ENCODE measurements at regions of chr6 and their contacts with region 1.

Region 1: GRCh38 chr6:16277101-16277981 is 39.0 kb downstream of the GMPR start:
- DNase-seq: peak; percentile 59 to 76
- H3K4me3 ChIP-seq: no peak overlapping the region
- H3K27ac ChIP-seq: no peak overlapping the region
- H3K4me1 ChIP-seq: no peaks in the 10 kb centered on the region; a peak in 2 of 7 replicates
- H3K27me3 ChIP-seq: no peaks in the 10 kb centered on the region
- CTCF ChIP-seq: peak; percentile 68 to 78 (median 73)
- EP300 ChIP-seq: no peak
- POLR2A ChIP-seq: no peak
- RAD21 ChIP-seq: peak; percentile 77 to 81

Region 2: DNA sequence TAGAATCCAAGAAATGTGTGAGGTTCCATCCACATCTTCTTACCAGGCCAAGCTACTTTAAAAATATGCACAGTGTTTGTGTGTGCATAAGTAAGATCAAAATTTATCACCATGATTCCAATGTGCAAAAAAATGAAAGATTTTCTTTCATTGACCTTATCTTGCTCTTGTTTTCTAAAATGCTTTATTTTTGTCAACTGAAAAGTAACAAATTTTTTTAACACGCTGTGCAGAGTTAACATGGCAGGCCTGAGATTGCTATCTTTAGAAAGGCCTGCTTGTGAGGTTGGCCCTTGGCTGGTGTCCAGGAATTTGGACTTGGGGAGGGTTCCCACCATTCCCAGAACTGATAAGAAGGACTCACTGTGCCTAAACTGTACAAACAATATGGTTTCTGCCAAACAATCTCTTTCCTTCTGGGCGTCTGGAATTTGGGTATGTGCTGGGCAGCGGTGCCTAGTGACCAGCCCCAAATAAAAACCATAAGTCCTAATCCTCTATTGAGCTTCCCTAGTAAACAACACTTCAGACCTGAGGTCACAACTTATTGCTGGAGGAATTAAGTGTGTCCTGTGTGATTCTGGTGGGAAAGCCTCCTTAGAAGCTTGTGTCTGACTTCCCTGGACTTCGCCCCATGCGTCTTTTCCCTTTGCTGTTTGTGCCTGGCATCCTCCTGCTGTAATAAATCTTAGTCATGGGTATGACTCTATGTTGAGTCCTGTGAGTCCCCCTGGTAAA is 168.3 kb before region 1 on chr6:
- CTCF ChIA-PET with region 1: no interaction called
- POLR2A ChIA-PET with region 1: no interaction called
- DNase-seq: no peak
- H3K4me3 ChIP-seq: no peak overlapping the region
- H3K27ac ChIP-seq: no peak overlapping the region
- H3K4me1 ChIP-seq: peaks cover 0 to 3% (median 0%) of the 10 kb centered on the region in 4 experiments; a peak in 1 of 7 replicates
- H3K27me3 ChIP-seq: no peaks in the 10 kb centered on the region
- CTCF ChIP-seq: no peak
- EP300 ChIP-seq: no peak
- POLR2A ChIP-seq: no peak
- RAD21 ChIP-seq: no peak

Region 3: GRCh38 chr6:16238057-16238962 is 39.0 kb before region 1 on chr6 and contains the start of gene GMPR:
- CTCF ChIA-PET with region 1: interaction called, 57 read pairs
- POLR2A ChIA-PET with region 1: no interaction called
- DNase-seq: peak in 1 of 2 experiments; percentile 63
- H3K4me3 ChIP-seq: peak within 1 kb of the TSS; percentile 39 to 67 (median 64)
- H3K27ac ChIP-seq: no peak within 1 kb of the TSS
- H3K4me1 ChIP-seq: peaks cover 0 to 6% (median 3%) of the 10 kb centered on the region in 4 experiments; a peak in 4 of 7 replicates
- H3K27me3 ChIP-seq: peaks cover 12 to 36% (median 30%) of the 10 kb centered on the region in 4 experiments
- CTCF ChIP-seq: no peak
- EP300 ChIP-seq: no peak
- POLR2A ChIP-seq: no peak
- RAD21 ChIP-seq: no peak
- total RNA-seq, gene GMPR: 0.99 and 1.2 TPM in 2 replicates

Region 4: DNA sequence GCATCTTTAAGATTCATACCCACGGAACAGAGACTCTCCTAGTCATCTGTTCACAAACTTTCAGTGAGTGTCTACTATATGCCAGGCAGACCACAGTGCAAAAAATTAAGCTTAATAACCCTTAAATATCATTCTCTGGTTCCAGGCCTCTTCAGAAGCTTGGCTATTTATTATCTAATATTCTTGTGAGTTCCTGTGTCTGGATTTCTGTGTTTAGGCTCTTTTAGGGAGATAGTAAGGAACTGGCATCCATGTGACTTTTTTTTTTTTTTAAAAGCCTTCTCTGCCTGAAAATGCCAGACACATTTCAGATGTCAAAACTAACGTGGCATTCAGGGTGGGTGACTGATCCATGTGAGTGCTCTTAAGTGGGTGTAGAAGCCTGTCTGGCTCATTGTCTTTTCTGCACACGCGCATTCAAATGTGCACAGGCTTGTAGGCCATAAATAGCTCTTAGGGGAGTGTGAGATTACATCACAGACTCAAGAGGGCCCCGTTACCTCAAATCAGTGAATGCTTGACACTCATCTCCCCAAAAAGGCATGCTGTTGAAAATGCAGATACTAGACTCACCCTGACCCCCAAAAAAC is 103.0 kb after region 1 on chr6:
- CTCF ChIA-PET with region 1: no interaction called
- POLR2A ChIA-PET with region 1: no interaction called
- DNase-seq: no peak
- H3K4me3 ChIP-seq: no peak overlapping the region
- H3K27ac ChIP-seq: no peak overlapping the region
- H3K4me1 ChIP-seq: no peaks in the 10 kb centered on the region; a peak in 1 of 7 replicates
- H3K27me3 ChIP-seq: no peaks in the 10 kb centered on the region
- CTCF ChIP-seq: no peak
- EP300 ChIP-seq: no peak
- POLR2A ChIP-seq: no peak
- RAD21 ChIP-seq: peak in 1 of 2 experiments; percentile 22; a peak in 1 of 4 replicates

Region 5: GRCh38 chr6:16494793-16495192 is 217.5 kb after region 1 on chr6:
- CTCF ChIA-PET with region 1: no interaction called
- POLR2A ChIA-PET with region 1: no interaction called
- DNase-seq: no peak
- H3K4me3 ChIP-seq: no peak overlapping the region
- H3K27ac ChIP-seq: no peak overlapping the region
- H3K4me1 ChIP-seq: peaks cover 4 to 21% (median 9%) of the 10 kb centered on the region in 4 experiments
- H3K27me3 ChIP-seq: no peaks in the 10 kb centered on the region
- CTCF ChIP-seq: no peak
- EP300 ChIP-seq: no peak
- POLR2A ChIP-seq: no peak
- RAD21 ChIP-seq: no peak